Sciatic nerve (tissue), 2 donors: ENCODE measurements at regions of chr7 and their contacts with region 1.

Region 1: DNA sequence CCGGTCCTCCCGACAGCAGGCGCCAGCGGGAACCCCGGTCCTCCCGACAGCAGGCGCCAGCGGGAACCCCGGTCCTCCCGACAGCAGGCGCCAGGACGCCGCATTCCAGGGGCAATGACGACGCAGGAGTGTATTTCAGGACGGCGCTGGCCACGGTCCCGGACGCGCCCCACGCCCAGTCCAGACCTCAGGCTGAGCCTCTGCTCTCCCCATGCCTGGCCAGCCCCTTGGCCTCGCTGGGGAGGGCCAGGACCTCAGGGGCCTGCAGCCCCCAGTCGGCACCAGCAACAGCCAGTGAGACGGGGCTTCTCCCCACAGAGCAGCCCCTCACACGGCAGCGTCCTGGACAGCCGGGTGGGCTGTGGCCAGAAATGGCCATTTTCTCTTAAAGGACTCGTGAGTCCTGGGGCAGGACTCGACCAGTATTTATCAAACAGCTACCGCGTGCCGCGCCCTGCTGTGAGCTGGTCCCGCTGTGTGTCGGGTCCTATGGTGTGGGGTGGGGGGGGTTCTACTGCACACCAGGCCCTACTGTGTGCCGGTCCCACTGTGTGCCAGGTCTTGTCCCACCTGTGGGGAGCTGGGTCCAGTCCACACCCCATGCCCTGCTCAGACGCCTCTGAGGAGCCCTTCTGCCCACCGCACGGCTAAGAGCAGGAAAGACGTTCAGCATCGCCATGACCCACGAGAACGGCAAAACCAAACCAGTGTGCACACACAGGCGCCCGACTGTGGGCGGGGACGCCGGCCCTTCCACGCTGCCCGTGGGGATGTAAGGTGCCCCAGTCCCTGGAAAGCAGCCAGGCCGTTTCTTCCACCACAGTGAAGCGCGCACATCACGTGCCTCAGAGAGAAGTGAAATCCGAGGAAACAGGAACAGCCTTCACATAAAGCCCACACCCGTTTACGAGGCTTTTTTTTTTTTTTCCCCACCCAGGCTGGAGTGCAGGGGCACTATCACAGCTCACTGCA is 33.3 kb downstream of the GET4 start:
- DNase-seq: peak; percentile 87
- ATAC-seq: peak; percentile 59

Region 2: DNA sequence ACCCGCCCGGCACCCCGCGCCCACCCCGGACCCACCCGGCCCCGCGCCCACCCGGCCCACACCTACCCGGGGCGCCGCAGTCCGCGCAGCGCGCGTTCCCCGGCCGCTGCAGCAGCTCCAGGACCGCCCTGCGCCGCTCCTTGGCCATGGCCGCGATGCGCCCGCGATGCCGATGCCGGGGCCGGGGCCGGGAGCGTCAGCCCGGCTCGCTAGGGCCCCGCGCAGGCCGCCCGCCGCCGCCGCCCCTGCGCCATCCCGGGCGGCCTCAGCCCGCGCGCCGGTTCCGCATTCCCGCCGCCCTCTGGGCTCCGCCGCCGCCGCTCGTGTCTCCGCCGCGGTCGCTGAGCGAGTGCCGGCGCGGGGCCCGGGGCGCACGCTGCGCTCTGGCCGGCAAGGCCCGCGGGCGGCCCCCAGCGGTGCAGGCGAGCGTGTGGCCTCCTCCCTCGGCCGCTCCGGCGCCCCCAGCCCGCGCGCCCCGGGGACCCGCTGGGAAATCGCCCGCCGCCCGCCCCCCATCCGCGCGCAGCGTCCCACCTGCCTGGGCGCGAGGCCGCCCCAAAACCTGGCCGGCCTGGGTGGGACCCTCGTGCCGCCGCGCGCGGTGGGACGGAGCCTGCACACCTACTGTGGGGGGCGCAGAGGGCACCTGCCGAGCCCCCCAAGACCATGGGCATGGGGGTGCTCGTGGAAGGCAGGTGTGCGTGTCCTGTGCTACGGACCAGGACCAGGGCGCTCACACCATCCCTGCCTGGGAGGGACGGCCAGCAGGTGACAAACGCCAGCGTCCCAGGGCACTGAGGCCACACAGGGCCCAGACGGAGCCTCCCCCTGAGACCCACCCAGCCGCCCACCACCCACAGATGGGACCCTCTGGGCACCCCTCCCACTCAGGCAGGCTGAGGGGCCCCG is 44.9 kb after region 1 on chr7 and contains the start of gene ADAP1:
- intact Hi-C with region 1: loop called (anchors 5 kb)
- DNase-seq: no peak
- ATAC-seq: no peak
- total RNA-seq, gene ADAP1: 42.8 TPM